Activated CD4-positive, alpha-beta T cell treated with anti-CD3 and anti-CD28 coated beads for 36 hours (primary cell): ENCODE measurements at regions of chr2 and their contacts with region 1.

Region 1: GRCh38 chr2:60881047-60881932 is at the start of gene REL:
- DNase-seq: peak; percentile 95
- ATAC-seq: peak; percentile 84
- H3K4me3 Mint-ChIP-seq: peak within 1 kb of the TSS; percentile 91
- H3K27ac Mint-ChIP-seq: peak within 1 kb of the TSS; percentile 98
- H3K4me1 Mint-ChIP-seq: peaks cover 25% of the 10 kb centered on the region
- H3K27me3 Mint-ChIP-seq: no peaks in the 10 kb centered on the region
- total RNA-seq, gene REL: 42.7 to 55.9 TPM

Region 2: DNA sequence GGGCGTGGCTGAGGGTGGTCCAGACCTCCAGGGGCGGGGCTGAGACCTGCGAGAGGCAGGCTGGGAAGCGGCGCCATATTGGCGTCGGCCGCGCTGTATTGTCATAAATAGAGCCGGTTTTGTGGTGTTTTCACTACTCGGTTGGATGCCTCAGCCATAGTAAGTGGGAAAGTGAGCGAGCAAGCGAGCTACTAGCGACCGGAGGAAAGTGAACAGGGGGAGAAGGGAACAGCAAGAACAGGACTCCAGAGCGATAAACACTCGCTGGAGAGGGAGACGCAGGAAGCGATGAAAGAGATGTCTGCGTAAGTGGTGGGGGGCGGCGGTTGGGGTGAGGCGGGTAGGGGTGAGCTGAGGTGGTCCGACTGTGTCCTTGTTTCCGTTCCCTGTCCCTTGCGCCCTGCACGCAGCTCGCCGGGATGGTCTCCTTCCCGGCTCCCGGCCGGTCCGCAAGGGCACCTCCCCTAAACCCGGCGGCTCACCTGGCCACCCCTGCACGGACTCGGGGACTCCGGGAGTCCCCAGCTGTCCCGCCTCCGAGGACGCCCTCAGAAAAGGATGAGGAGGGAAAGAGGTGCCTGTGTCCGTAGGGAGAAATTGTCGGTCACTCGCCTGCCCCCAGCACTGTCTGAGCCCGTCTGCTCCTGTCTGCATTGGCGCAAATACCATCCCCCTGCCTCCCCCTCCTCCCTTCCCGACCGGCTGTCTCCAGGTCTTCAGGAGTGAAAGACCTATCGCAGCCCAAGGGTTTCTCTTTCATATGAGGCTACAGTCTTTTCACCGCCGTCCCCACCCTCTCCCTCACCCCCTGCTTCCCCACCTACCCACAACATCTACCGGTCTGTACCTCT is 124.9 kb before region 1 on chr2 and contains the start of gene PAPOLG:
- CTCF ChIA-PET with region 1: no interaction called
- POLR2A ChIA-PET with region 1: no interaction called
- intact Hi-C with region 1: loop called (anchors 1 to 2 kb)
- DNase-seq: peak; percentile 99
- ATAC-seq: peak; percentile 98
- H3K4me3 Mint-ChIP-seq: peak within 1 kb of the TSS; percentile 99
- H3K27ac Mint-ChIP-seq: peak within 1 kb of the TSS; percentile 100
- H3K4me1 Mint-ChIP-seq: peaks cover 34% of the 10 kb centered on the region
- H3K27me3 Mint-ChIP-seq: no peaks in the 10 kb centered on the region
- total RNA-seq, gene PAPOLG: 13.8 to 14.2 TPM

Region 3: GRCh38 chr2:60806988-60807681 is 74.2 kb before region 1 on chr2:
- CTCF ChIA-PET with region 1: interaction called, 22 read pairs
- POLR2A ChIA-PET with region 1: interaction called, 10 read pairs
- intact Hi-C with region 1: loop called (anchors 1 kb)
- DNase-seq: peak; percentile 83
- ATAC-seq: peak; percentile 92
- H3K4me3 Mint-ChIP-seq: peak overlapping the region; percentile 41
- H3K27ac Mint-ChIP-seq: peak overlapping the region; percentile 86
- H3K4me1 Mint-ChIP-seq: peaks cover 53% of the 10 kb centered on the region
- H3K27me3 Mint-ChIP-seq: no peaks in the 10 kb centered on the region

Region 4: DNA sequence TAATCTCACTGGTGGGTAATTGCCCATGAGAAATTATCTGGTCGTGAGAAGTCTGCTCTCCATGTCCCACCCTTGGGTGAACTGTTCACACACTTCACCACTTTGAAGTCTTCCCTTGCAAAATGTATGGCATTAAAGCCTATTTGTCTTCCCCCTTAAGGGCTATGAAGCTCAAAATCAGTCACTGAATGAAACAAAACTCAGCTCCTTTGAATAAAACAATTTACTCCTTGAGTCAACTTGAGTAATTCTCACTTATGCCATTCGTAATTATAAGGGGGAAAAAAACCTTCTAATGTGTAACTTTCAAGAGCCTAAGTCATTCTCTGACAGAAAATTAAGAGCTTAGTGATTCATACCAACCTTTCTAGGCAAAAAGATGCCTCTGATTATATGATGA is 48.7 kb before region 1 on chr2:
- CTCF ChIA-PET with region 1: interaction called, 3 read pairs
- POLR2A ChIA-PET with region 1: interaction called, 6 read pairs
- intact Hi-C with region 1: loop called in 1 of 2 experiments (anchors 2 kb)
- DNase-seq: no peak
- ATAC-seq: peak; percentile 89
- H3K4me3 Mint-ChIP-seq: no peak overlapping the region
- H3K27ac Mint-ChIP-seq: peak overlapping the region; percentile 80
- H3K4me1 Mint-ChIP-seq: peaks cover 41% of the 10 kb centered on the region
- H3K27me3 Mint-ChIP-seq: peaks cover 4% of the 10 kb centered on the region

Region 5: GRCh38 chr2:60899230-60899891 is 18.1 kb after region 1 on chr2:
- CTCF ChIA-PET with region 1: interaction called, 10 read pairs
- POLR2A ChIA-PET with region 1: interaction called, 11 read pairs
- intact Hi-C with region 1: loop called (anchors 1 kb)
- DNase-seq: peak; percentile 74
- ATAC-seq: peak; percentile 86
- H3K4me3 Mint-ChIP-seq: peak overlapping the region; percentile 35
- H3K27ac Mint-ChIP-seq: peak overlapping the region; percentile 79
- H3K4me1 Mint-ChIP-seq: peaks cover 46% of the 10 kb centered on the region
- H3K27me3 Mint-ChIP-seq: no peaks in the 10 kb centered on the region

Region 6: DNA sequence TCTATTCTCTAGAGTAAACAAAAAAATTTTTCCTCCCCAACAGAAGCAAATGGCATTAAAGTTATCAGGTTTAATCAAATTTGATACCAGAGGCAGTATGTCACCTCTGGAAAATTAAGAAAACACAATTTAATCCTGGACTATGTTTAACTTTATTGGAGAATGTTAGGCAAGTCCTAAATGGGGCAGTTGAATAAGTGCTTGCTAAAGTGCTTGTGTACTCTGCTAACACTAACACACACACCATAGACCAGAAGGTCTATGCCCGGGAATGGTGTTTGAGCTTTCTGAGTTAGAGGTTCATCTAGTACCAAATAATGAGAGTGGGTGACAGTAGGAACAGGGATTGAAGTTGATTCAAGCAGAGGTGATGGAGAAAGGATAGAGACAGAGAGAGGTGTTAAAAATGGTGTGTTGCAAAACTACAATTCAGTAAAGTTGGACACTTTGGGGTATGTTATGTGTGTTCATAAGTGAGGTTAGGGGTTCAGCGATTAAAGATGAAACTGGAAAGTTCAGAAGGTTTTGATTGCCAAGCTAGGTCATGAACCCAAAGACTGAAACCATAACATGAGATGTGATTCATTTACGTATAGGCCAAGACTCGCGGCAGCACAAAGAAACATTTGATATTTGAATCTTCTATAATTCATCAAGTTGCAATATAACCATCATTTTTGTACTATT is 95.7 kb after region 1 on chr2:
- CTCF ChIA-PET with region 1: no interaction called
- POLR2A ChIA-PET with region 1: interaction called, 4 read pairs
- intact Hi-C with region 1: loop called (anchors 2 kb)
- DNase-seq: peak; percentile 53
- ATAC-seq: peak; percentile 94
- H3K4me3 Mint-ChIP-seq: peak overlapping the region; percentile 2
- H3K27ac Mint-ChIP-seq: peak overlapping the region; percentile 86
- H3K4me1 Mint-ChIP-seq: peaks cover 44% of the 10 kb centered on the region
- H3K27me3 Mint-ChIP-seq: no peaks in the 10 kb centered on the region

Region 7: DNA sequence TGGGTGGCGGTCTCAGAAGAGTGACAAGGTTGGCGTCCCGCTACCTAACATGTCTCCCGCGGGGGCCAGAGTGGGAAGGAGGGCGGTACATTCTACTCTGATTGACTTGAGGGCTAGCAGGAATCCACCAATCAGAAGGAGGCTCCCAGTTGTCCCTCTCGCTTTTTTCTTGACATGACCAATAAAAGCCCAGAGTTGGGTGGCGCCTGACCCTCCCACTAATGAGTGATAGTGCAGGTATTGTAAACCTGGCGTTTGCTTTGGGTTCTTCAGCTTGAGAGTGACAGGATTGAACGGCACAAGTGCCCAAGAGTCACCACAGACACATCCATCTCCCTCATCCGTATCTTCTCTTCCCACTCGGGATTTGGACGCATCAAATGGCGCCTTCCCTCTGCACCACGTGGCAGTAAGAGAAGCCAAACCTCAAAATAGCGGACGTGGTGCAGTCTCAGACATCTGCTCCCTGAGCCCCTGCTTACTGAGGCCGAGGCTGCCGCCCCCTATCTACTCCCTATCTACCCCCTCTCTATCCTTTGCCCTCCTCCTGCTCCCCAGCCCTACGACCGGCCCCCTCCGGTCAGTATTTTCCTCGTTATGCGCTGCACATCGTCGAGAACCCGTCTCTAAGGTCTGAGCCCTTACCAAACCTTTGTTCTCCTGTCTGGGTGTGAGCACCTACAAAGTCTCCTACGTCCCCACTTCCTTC is 973.3 kb after region 1 on chr2:
- CTCF ChIA-PET with region 1: no interaction called
- POLR2A ChIA-PET with region 1: no interaction called
- intact Hi-C with region 1: loop called in 1 of 2 experiments (anchors 5 kb)
- DNase-seq: peak; percentile 93
- ATAC-seq: peak; percentile 94
- H3K4me3 Mint-ChIP-seq: peak overlapping the region; percentile 99
- H3K27ac Mint-ChIP-seq: peak overlapping the region; percentile 94
- H3K4me1 Mint-ChIP-seq: peaks cover 20% of the 10 kb centered on the region
- H3K27me3 Mint-ChIP-seq: no peaks in the 10 kb centered on the region